Ovary (tissue), 10 donors: ENCODE measurements at regions of chr3 and their contacts with region 1.

Region 1: GRCh38 chr3:151439652-151440129 is 21.2 kb downstream of the IGSF10 start:
- DNase-seq: peak in 1 of 5 donors; percentile 37
- H3K4me3 ChIP-seq: no peak overlapping the region
- H3K27ac ChIP-seq: no peak overlapping the region
- H3K4me1 ChIP-seq: peaks cover 3% of the 10 kb centered on the region
- H3K27me3 ChIP-seq: no peaks in the 10 kb centered on the region
- CTCF ChIP-seq: peak; percentile 67 to 79 (median 73)
- EP300 ChIP-seq: no peak
- POLR2A ChIP-seq: no peak

Region 2: DNA sequence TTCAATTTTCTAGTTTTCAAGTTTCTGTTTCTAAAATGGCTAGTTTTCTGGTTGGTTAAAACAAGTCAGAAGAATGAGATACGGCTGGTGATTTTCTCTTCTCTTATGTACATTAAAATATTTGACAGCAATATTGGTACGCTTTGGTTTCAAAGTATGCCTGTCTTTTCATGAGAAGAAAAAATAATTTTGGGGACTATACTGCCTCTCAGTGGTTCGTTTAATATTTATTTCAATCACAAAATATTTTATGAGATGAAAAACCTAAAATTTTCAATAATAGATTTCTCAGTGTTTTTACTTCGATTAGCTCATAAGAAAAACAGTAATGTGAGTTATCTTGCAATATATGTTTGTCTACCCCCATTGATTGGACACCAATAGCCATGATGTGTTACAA is 221.2 kb after region 1 on chr3:
- intact Hi-C with region 1: loop called in 2 of 4 experiments (anchors 5 kb)
- DNase-seq: no peak
- H3K4me3 ChIP-seq: no peak overlapping the region
- H3K27ac ChIP-seq: no peak overlapping the region
- H3K4me1 ChIP-seq: no peaks in the 10 kb centered on the region
- H3K27me3 ChIP-seq: no peaks in the 10 kb centered on the region
- CTCF ChIP-seq: peak in 2 of 3 donors; percentile 47 to 61
- EP300 ChIP-seq: no peak
- POLR2A ChIP-seq: no peak

Region 3: GRCh38 chr3:151838583-151839312 is 399.1 kb after region 1 on chr3:
- intact Hi-C with region 1: loop called (anchors 5 to 10 kb)
- DNase-seq: peak in 4 of 5 donors; percentile 30 to 70 (median 44)
- H3K4me3 ChIP-seq: peak overlapping the region; percentile 8
- H3K27ac ChIP-seq: no peak overlapping the region
- H3K4me1 ChIP-seq: no peaks in the 10 kb centered on the region
- H3K27me3 ChIP-seq: no peaks in the 10 kb centered on the region
- CTCF ChIP-seq: peak; percentile 61 to 87 (median 84)
- EP300 ChIP-seq: no peak
- POLR2A ChIP-seq: no peak

Region 4: DNA sequence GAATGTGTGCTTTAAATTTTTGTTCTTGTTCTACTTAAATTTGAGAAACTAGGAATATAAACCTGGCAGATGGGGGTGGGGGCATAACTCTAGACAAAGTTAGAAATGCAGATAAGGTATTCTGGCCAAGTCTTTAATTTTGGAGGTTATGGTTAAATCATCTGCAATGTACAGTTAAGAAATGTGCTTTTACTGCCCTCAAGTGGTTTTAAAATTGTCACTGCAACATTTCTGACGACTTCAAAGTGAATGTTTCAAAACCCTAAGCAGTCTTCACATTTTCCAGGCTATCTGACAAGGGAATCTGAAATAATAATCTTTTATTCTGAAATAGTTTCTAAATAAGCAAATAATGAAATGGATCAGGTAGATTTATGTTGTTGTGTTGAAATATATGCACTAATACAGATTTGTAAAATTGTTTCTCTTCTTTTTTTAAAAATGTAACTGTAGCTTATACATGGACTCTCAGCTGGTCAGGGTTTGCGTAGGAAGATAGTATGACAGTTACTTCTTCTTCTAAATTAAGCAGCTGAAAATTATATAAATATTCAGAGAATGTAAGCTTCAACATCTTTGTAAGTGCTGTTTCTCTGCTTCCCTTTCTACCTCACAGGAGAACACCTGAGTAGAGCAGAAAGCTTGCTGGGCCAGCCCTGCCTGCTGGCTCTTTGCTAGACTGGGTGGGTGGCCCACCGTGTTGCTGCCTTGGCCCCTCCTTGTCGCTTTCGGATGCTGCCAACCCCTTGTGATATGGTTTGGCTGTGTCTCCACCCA is 478.8 kb after region 1 on chr3:
- intact Hi-C with region 1: loop called in 2 of 4 experiments (anchors 10 kb)
- DNase-seq: no peak
- H3K4me3 ChIP-seq: no peak overlapping the region
- H3K27ac ChIP-seq: no peak overlapping the region
- H3K4me1 ChIP-seq: no peaks in the 10 kb centered on the region
- H3K27me3 ChIP-seq: no peaks in the 10 kb centered on the region
- CTCF ChIP-seq: peak; percentile 10 to 59 (median 39)
- EP300 ChIP-seq: no peak
- POLR2A ChIP-seq: no peak

Region 5: DNA sequence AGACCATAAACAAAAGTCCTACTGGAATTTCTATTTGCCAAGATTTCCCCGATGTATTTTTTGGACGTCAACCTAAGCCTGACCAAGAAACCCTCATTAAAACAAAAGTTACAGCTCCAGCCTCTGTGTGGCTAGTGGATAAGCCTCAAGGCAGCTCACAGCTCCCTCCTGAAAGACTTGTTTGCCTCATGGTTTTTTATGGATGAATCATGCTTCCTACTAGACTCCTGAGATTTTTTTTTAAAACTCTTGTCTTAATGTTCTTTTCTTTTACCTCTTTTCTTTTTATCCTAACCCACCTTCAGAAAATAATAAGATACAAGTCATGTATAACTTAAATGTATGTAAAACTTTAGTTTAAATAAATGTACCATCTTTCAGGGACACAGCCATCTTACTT is 486.2 kb after region 1 on chr3:
- intact Hi-C with region 1: loop called in 1 of 4 experiments (anchors 10 kb)
- DNase-seq: no peak
- H3K4me3 ChIP-seq: no peak overlapping the region
- H3K27ac ChIP-seq: no peak overlapping the region
- H3K4me1 ChIP-seq: no peaks in the 10 kb centered on the region
- H3K27me3 ChIP-seq: no peaks in the 10 kb centered on the region
- CTCF ChIP-seq: no peak
- EP300 ChIP-seq: no peak
- POLR2A ChIP-seq: no peak